ENCODE measurements at regions of chr11 and their contacts with region 1.

Region 1: GRCh38 chr11:128290106-128290840 is 297.1 kb downstream of the ETS1 start:
- DNase-seq: peak; percentile 35 to 47
- ATAC-seq: peak; percentile 96 to 97
- H3K4me3 ChIP-seq: peak overlapping the region; percentile 10 to 35 (median 20)
- H3K27ac ChIP-seq: peak overlapping the region; percentile 50 to 59 (median 53)
- H3K4me1 ChIP-seq: peaks cover 9% of the 10 kb centered on the region in 2 donors
- H3K27me3 ChIP-seq: no peaks in the 10 kb centered on the region
- CTCF ChIP-seq: peak; percentile 80 to 88 (median 85)
- POLR2A ChIP-seq: no peak

Region 2: DNA sequence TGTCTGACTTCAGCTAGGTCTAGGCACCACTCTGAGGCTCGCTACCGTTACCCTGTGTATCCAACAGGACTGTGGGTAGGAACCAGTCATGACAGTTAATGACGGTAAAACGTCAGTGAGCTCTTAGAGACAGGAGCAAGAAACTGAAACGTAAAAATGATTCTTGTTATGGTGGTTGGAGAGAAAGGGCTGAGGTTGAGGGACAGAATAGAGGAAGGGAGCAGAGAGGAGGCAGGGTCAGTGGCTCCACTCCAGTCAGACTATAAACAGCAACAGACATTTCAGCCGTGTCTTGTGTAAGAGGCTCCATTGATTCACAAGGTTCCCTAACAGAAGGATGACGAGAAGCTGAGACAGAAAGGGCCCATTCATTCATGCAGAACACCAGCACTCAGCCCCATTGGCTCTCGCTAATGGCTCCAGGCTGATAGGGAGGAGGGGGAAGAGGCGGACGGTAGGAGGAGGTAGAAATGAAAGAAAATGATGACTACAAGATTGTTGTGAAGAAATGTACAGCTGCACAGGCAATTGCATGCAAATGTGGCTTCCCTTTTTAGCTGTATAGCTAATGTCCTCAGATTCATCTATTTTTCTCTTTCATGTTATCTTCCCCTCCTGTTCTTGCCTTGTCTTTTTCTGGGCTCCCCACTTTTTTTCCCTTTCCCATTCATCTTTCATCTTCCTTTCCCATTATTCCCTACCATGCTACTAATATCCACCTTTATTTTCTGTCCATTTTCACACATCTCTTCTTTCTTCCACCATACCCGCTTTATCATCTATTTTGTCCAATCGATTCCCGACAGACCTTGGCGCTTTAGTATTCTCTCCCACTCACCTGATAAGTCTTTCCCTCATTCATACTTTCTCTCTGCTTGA is 262.7 kb after region 1 on chr11:
- in situ Hi-C with region 1: no loop called
- intact Hi-C with region 1: loop called (anchors 2 kb)
- DNase-seq: no peak
- ATAC-seq: no peak
- H3K4me3 ChIP-seq: no peak overlapping the region
- H3K27ac ChIP-seq: peak overlapping the region in 3 of 4 donors; percentile 21 to 41 (median 29)
- H3K4me1 ChIP-seq: peaks cover 3 to 5% of the 10 kb centered on the region in 2 donors
- H3K27me3 ChIP-seq: no peaks in the 10 kb centered on the region
- CTCF ChIP-seq: no peak
- POLR2A ChIP-seq: no peak

Region 3: GRCh38 chr11:128643661-128644317 is 353.5 kb after region 1 on chr11:
- in situ Hi-C with region 1: no loop called
- intact Hi-C with region 1: no loop called
- DNase-seq: no peak
- ATAC-seq: no peak
- H3K4me3 ChIP-seq: no peak overlapping the region
- H3K27ac ChIP-seq: no peak overlapping the region
- H3K4me1 ChIP-seq: no peaks in the 10 kb centered on the region
- H3K27me3 ChIP-seq: no peaks in the 10 kb centered on the region
- CTCF ChIP-seq: no peak
- POLR2A ChIP-seq: no peak